Left cardiac atrium (tissue), 4 donors: ENCODE measurements at regions of chr2 and their contacts with region 1.

Region 1: DNA sequence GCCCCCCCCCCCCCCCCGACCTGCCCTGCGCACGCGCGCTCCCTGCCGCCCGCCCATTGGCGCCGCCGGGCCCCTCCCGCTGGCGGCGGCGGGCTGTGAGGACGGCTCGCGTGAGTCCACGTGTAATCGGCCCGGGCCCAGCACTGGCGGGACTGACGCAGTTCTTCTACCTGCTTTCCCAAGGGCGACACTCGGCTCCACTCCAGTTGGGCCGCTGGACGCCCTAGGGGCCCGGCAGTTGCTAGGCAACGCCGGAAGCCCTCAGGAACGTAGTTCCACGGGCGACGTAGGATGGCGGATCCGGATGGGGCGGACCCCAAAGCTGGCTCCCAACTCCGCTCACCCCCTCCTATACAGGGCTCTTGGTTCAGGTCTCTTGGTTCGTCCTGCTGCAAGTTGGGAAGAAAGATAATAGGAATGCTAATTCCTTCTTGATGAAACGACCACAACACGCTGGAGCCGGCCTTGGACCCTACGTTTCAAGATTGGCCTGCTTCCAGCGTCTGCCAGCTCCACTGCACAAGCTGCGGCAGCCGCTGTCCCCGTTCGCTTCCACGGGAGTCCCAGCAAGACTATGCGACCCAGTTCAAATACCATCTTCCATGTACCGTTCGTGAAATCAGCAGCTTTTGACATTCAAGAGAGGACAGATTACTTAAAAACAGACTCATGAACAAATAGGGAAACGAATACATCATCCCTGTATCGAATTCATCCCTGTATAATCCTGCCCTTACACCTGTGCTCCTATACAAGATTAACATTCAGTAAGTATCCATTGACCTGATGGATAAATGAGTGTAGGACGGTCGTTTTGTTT is 415 bp upstream of the MCFD2 start:
- DNase-seq: peak; percentile 95
- ATAC-seq: peak; percentile 93 to 94

Region 2: GRCh38 chr2:46769809-46770208 is 146.2 kb before region 1 on chr2:
- intact Hi-C with region 1: no loop called
- DNase-seq: no peak
- ATAC-seq: no peak

Region 3: DNA sequence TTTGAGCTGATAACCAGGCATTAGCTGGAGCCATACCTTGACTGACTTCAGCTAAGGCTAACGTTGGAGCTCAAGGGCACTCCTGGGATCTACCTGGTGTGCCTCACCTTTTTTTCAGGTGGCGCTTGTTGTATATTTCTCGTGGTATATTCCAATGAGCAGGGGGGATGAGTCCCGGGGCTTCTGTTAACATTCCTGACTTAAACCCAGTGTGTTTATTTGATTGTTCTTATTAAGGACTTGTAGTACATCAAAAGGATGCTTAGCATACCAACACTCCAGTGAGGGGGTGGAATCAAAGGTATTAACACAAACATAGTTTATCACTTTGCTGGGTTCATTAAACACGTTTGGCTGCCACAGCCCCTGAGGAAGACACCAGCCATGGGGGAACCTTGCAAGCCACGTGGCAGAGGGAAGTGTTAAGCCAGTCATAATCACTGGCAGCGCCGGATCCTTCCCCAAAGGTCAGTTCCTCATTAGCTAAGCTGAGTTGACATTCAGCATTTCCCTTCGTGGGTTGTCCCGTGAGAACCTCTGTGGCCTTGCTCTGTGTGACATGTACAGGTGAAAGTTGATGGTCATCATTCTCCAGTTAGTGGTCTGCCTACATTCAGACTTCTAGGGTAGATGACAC is 119.1 kb after region 1 on chr2:
- intact Hi-C with region 1: no loop called
- DNase-seq: peak; percentile 74
- ATAC-seq: peak in 1 of 2 donors; percentile 18

Region 4: GRCh38 chr2:47323009-47323821 is 407.2 kb after region 1 on chr2:
- intact Hi-C with region 1: loop called in 1 of 2 experiments (anchors 2 kb)
- DNase-seq: peak; percentile 69
- ATAC-seq: peak; percentile 95 to 96